ENCODE measurements at regions of chr9 and their contacts with region 1.

Region 1: DNA sequence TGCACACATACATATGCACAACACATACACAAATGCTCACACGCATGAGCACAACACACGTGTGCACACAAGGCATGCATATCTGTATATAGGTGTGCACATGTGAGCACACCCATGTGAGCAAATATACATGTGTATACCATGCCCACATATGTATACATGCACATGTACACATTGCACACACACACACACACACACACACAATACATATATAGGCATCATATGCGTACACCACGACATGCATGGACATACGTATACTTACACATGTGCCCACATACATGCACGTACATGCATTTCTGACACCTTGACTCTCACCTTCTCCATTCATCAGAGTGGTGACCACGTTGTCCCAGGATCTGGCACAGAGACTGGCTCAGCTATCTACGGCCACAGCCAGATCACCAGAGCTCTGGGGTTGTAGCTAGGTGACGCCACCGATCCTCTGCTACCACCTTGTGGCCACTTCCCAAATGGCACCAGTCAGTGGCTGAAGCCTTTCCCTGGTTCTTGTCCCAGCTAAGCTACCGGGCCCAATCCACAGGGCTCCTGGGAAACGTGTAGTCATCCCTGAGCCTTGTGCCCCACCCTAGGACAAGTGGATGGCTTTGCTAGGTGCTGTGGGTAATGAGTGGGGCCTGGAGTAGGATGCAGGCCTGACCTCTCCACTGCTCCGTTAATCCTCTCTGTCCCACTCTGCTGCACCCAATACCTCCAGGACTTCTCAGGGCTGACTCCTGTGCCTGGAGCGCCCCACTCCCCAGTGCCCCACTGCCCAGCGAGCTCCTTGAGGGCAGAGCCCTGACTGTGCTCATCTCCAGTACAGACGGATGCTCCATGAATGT is 194.4 kb downstream of the RGS3 start:
- DNase-seq: peak; percentile 85
- H3K4me3 Mint-ChIP-seq: no peak overlapping the region
- H3K27ac Mint-ChIP-seq: peak overlapping the region; percentile 34
- H3K4me1 Mint-ChIP-seq: peaks cover 5% of the 10 kb centered on the region
- H3K27me3 Mint-ChIP-seq: peaks cover 30% of the 10 kb centered on the region

Region 2: GRCh38 chr9:113299800-113300292 is 358.1 kb before region 1 on chr9:
- CTCF ChIA-PET with region 1: interaction called, 13 read pairs
- DNase-seq: no peak
- H3K4me3 Mint-ChIP-seq: no peak overlapping the region
- H3K27ac Mint-ChIP-seq: no peak overlapping the region
- H3K4me1 Mint-ChIP-seq: no peaks in the 10 kb centered on the region
- H3K27me3 Mint-ChIP-seq: peaks cover 26% of the 10 kb centered on the region

Region 3: DNA sequence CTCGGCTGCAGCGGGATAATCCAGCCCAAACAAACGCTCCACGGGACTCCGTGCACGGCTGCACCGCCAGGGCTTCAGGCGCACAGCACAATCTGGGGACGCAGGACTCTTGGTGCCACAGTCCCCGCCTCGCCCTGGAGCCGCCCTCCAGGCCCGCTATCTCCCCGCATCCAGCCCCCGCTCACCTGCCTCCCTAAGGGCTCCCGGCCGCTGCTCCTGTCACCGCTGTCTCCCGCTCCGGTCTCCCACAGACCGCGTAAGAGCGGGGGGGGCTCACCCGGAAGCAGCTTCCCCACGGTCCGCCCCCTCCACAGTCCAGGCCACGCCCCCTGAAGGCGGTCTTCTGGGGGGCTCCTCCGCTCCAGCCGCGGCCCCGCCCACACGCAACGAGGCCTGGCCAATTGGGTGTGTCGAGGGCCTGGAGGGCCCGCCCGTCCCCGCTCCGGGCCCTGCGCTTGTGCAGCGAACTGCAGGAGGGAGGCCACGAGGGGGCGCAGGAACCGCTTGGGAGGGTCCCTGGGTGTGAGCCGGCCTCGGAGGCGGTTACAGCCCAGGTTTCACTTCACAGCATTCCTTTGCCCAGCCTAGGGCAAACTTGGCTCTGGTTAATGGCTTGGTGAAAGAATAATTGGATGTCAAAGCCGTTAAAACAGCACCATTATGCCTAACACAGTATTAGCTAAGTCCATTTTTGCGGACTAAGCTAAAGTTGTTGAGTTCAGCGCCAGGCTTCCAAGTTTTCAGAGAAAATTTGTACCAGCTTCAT is 256.7 kb before region 1 on chr9 and contains the start of gene ALAD:
- CTCF ChIA-PET with region 1: interaction called, 71 read pairs
- DNase-seq: peak; percentile 99
- H3K4me3 Mint-ChIP-seq: peak within 1 kb of the TSS; percentile 94
- H3K27ac Mint-ChIP-seq: peak within 1 kb of the TSS; percentile 83
- H3K4me1 Mint-ChIP-seq: peaks cover 26% of the 10 kb centered on the region
- H3K27me3 Mint-ChIP-seq: peaks cover 3% of the 10 kb centered on the region

Region 4: DNA sequence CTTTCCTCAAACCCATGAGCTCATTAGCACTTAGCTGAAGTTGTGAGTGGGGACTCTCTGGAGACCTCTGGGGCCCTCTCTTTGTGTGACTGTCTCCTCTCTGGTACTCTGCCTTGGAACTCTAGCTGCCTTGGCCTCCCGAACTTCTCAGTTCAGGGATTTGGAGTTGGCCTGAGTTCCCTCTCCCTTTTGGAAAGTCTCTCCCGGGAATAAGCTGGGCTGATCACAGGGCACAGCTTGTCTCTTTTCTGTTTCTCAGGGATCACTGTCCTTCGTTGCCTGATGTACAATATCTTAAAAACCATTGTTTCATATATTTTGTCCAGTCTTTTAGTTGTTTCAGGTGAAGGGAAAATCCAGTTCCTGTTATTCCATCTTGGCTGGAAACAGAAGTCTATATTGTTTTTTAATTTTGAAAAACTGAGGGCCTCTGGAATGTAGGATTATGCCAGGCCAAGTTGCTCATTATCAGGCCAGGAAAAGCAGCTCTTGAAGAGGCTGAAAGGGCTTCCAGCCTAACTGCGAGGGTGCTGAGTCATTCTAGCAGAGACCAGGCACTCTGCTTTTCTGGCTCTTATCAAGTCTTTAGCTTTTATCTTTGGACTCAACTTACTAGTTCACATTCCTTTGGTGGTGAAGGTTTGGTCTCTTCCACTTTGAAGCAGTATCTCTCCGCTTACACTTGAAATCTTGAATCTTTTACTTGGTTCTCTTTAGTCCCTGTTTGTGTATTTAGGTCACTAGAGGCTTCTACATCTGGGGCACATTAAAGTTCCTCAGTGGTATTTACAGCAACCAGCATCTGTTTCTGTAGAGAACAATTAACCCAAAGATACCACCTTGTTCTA is 202.8 kb before region 1 on chr9:
- CTCF ChIA-PET with region 1: interaction called, 20 read pairs
- DNase-seq: no peak
- H3K4me3 Mint-ChIP-seq: no peak overlapping the region
- H3K27ac Mint-ChIP-seq: no peak overlapping the region
- H3K4me1 Mint-ChIP-seq: peaks cover 8% of the 10 kb centered on the region
- H3K27me3 Mint-ChIP-seq: no peaks in the 10 kb centered on the region

Region 5: DNA sequence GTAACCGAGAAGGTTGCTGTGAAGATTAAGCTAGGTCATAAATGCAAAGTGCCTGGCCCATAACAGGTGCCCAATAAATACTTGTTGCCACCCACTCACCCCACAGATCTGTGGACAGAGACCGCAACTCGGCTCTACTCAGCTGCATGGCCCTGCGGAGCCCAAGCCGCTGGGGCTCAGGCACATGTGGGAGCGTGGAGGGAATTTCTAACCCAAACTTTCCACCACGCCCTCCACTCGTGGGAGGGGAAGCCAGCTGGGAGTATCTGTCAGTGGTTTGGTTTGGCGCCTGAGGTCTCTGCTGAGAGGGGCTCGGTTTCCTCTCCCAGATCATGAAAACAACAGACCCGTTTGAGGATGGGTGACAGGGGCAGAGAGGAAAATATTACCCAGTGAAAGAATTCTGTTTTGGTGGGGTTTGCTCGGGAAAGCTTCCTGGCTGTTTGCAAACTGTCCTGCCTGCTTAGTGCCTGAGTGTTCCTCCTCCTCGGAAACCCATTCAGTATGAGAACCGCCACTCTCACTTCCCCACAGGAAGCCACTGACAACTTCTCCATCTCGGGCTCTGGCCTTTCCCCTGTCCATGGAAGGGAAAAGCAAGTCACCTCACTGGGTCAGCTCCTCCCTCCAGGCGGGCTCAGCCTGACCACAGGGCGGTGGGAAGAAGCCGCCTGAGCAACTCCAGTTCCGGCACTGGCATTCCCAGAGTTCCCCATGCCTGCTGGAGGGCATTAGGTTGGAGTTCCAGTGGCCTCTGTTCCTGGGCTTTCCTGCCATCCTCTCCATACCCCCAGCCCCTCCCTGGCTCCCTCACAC is 134.3 kb before region 1 on chr9:
- CTCF ChIA-PET with region 1: no interaction called
- DNase-seq: peak; percentile 51
- H3K4me3 Mint-ChIP-seq: peak overlapping the region; percentile 47
- H3K27ac Mint-ChIP-seq: peak overlapping the region; percentile 77
- H3K4me1 Mint-ChIP-seq: peaks cover 62% of the 10 kb centered on the region
- H3K27me3 Mint-ChIP-seq: no peaks in the 10 kb centered on the region

Region 6: GRCh38 chr9:113591001-113591898 is 66.7 kb before region 1 on chr9:
- CTCF ChIA-PET with region 1: interaction called, 429 read pairs
- DNase-seq: peak; percentile 68
- H3K4me3 Mint-ChIP-seq: no peak overlapping the region
- H3K27ac Mint-ChIP-seq: no peak overlapping the region
- H3K4me1 Mint-ChIP-seq: peaks cover 50% of the 10 kb centered on the region
- H3K27me3 Mint-ChIP-seq: no peaks in the 10 kb centered on the region

Region 7: DNA sequence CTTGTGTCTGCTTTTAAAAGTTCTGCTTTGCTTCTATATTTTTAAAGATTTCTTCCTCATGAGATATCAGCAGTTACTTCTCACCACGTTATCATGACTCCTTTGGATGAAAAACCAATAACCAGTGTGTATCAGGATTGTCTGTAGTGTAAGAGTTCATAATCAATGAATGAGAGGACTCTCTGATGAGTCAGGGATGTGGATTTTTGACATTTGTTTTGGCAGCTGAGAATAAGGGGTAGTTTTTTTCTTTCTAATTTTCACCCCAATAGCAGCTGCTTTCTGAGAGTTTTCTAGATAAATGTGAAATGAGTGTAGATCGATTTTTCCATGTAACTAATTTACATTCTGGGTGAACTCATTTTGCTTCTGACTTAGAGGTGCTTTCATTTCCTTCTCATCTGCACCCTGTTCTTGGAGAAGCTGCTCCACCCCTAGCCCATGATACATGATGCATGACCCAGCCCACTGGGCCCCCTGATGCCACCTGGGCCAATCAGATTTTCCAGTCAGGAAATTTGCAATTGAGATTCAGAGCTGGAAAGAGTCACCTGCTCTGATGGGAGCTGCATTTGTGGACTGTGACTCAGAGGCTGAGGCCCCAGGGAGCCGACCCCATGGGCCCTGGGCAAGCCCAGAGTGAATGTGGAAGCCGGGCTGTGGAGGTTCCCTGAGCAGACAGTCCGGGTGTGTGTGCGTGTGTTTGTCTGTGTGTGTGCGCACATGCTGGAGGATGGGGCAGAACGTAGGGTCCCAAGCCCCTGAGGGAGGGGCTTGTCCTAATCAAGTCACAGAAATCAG is 35.1 kb before region 1 on chr9:
- CTCF ChIA-PET with region 1: interaction called, 21 read pairs
- DNase-seq: no peak
- H3K4me3 Mint-ChIP-seq: no peak overlapping the region
- H3K27ac Mint-ChIP-seq: no peak overlapping the region
- H3K4me1 Mint-ChIP-seq: peaks cover 3% of the 10 kb centered on the region
- H3K27me3 Mint-ChIP-seq: peaks cover 20% of the 10 kb centered on the region